Posterior cingulate gyrus (tissue), 11 donors: ENCODE measurements at regions of chr7 and their contacts with region 1.

Region 1: DNA sequence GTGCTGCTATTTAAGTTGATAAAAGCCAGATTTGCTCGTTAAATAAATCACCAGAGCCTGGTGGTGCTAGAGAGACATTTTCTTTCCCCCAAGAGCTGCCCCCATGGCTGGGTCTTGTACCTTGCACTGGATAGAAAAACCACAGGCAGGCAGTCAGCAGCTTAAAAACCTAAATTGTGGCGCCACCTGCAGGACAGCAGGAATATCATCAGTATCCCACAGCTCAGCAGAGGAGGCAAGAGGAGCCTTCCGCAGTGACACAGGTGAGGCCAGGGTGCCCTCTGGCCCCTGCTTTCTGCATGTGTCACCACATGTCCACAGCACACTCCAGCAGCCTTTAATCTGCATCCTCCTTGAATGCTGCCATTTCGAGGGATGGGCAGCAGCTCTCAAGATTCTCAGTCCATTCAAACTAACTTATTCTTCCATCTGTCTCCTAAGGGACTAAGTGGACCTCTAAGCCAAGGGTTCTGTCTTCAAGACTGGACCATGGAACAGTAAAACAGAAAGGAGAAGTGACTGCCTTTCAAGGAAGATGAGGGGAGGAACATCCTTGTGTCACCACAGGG is 4.5 kb upstream of the PLXNA4 start:
- DNase-seq: peak; percentile 57 to 95 (median 78)

Region 2: GRCh38 chr7:131688738-131689661 is 891.8 kb before region 1 on chr7:
- intact Hi-C with region 1: loop called (anchors 2 kb)
- DNase-seq: peak; percentile 50 to 93 (median 76)

Region 3: GRCh38 chr7:132318352-132319318 is 262.2 kb before region 1 on chr7:
- intact Hi-C with region 1: loop called (anchors 1 kb)
- DNase-seq: peak; percentile 76 to 97 (median 89)

Region 4: GRCh38 chr7:133434055-133434865 is 853.5 kb after region 1 on chr7:
- intact Hi-C with region 1: loop called (anchors 10 kb)
- DNase-seq: no peak